Activated CD4-positive, alpha-beta memory T cell treated with anti-CD3 and anti-CD28 coated beads for 36 hours (primary cell): ENCODE measurements at regions of chr9 and their contacts with region 1.

Region 1: GRCh38 chr9:69971643-69972449 is 71.8 kb upstream of the MAMDC2 start:
- DNase-seq: peak; percentile 69
- H3K4me3 Mint-ChIP-seq: no peak overlapping the region
- H3K27ac Mint-ChIP-seq: no peak overlapping the region
- H3K4me1 Mint-ChIP-seq: no peaks in the 10 kb centered on the region
- H3K27me3 Mint-ChIP-seq: peaks cover 15% of the 10 kb centered on the region

Region 2: GRCh38 chr9:69961830-69962229 is 10.0 kb before region 1 on chr9:
- CTCF ChIA-PET with region 1: no interaction called
- POLR2A ChIA-PET with region 1: no interaction called
- intact Hi-C with region 1: no loop called
- DNase-seq: no peak
- H3K4me3 Mint-ChIP-seq: no peak overlapping the region
- H3K27ac Mint-ChIP-seq: no peak overlapping the region
- H3K4me1 Mint-ChIP-seq: no peaks in the 10 kb centered on the region
- H3K27me3 Mint-ChIP-seq: peaks cover 7% of the 10 kb centered on the region

Region 3: GRCh38 chr9:70229579-70229978 is 257.7 kb after region 1 on chr9:
- CTCF ChIA-PET with region 1: interaction called, 5 read pairs
- POLR2A ChIA-PET with region 1: no interaction called
- intact Hi-C with region 1: loop called (anchors 10 kb)
- DNase-seq: no peak
- H3K4me3 Mint-ChIP-seq: no peak overlapping the region
- H3K27ac Mint-ChIP-seq: no peak overlapping the region
- H3K4me1 Mint-ChIP-seq: no peaks in the 10 kb centered on the region
- H3K27me3 Mint-ChIP-seq: peaks cover 2% of the 10 kb centered on the region

Region 4: DNA sequence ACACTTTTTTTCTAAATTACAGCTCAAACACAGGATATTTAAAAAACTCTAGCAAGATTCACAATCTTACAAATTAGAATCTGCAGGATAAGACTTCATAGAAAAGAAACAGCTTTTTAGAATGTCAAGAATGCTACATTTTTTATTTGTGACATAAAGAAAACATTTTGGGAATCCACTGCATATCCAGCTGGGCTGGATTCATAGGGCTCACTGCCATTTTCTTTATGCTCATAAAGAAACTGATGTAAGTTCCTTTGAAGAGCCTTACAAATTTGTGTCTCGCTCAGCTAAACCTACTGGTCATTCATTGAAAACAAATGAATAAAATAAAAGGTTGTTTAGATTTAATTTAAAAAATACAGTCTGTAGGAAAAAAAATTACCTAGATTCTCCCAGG is 817.2 kb after region 1 on chr9:
- CTCF ChIA-PET with region 1: interaction called, 10 read pairs
- POLR2A ChIA-PET with region 1: no interaction called
- intact Hi-C with region 1: no loop called
- DNase-seq: no peak
- H3K4me3 Mint-ChIP-seq: no peak overlapping the region
- H3K27ac Mint-ChIP-seq: no peak overlapping the region
- H3K4me1 Mint-ChIP-seq: no peaks in the 10 kb centered on the region
- H3K27me3 Mint-ChIP-seq: no peaks in the 10 kb centered on the region